ENCODE measurements at regions of chr19 and their contacts with region 1.

Region 1: DNA sequence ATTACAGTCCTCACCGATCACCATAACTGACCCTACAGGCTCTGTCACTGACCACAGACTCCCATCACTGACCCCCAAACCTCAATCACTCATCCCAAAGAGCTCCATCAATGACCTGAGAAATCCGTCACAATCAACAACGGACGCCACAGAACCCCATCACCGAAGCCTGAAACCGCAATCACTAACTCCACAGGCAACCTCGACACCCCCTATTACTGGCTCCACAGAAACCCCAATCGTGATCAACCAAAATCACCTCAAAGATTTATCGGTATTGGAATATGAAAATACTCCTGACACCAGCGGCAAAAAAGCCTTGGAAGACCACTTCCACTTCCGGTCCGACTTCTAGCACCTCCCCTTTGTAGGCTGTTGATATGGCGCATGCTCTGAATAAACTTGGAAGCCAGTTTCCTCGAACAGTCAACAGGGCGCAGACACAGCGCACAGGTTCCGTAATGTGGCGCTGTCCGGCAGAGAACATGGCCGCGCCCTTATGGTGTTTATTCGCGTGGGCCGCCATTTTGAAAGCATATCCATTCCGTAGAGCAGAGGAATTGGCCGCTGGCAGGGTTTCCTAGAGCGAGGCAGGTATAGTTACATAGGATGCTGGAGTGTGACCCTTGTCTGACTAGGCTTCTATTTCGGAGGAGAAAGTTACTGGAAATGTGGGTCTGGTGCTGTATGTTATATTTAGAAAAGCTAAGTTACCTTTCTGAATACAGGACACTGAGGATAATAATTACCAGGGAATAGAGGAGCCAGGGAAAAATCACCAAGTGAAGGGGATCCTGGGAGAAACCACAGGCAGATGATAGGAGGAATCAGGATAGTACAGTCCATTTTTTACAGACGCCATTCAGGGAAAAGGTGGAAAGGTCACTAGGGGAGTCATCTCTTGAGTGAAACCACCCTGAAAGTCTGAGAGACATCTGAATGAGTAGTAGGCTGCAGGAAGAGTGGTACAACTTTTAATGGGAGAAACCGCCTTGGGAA is at the start of gene ZNF585A:
- DNase-seq: peak; percentile 96
- ATAC-seq: peak; percentile 100
- H3K4me3 ChIP-seq: peak within 1 kb of the TSS; percentile 72 to 96 (median 82)
- H3K4me3 Mint-ChIP-seq: no peak within 1 kb of the TSS
- H3K27ac ChIP-seq: peak within 1 kb of the TSS; percentile 70 to 89
- H3K27ac Mint-ChIP-seq: no peak within 1 kb of the TSS
- H3K4me1 ChIP-seq: peaks cover 5 to 7% of the 10 kb centered on the region in 2 donors
- H3K4me1 Mint-ChIP-seq: peaks cover 3% of the 10 kb centered on the region
- H3K27me3 ChIP-seq: no peaks in the 10 kb centered on the region
- H3K27me3 Mint-ChIP-seq: no peaks in the 10 kb centered on the region
- CTCF ChIP-seq: peak; percentile 23
- total RNA-seq, gene ZNF585A: 20.0 and 22.0 TPM in 2 replicates

Region 2: DNA sequence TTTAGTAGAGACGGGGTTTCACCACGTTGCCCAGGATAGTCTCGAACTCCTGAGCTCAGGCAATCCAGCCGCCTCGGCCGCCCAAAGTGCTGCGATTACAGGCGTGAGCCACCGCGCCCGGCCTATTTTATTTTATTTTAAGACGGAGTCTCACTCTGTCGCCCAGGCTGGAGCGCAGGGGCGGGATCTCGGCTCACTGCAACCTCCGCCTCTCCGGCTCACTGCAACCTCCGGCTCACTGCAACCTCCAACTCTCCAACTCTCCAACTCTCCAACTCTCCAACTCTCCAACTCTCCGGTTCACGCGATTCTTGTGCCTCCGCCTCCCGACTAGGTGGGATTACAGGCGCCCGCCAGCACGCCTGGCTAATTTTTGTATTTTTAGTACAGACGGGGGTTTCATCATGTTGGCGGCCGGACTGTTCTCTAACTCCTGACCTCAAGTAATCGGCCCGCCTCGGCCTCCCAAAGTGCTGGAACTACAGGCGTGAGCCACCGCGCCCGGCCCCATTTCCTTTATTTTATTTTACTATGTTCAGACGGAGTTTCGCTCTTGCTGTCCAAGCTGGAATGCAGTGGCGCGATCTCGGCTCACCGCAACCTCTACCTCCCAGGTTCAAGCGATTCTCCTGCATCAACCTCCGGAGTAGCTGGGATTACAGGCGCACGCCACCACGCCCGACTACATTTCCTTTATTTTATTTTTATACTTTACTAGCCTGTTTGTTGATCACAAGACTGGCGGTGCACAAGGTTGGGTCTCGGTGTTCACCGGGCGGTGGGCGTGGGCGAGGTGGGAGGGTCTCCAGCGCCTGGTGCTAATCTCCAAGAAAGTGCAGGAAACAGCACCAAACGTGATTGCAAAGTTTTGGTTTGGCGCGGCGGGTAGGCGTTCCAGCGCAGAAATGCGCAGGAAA is 376.3 kb before region 1 on chr19:
- CTCF ChIA-PET with region 1: no interaction called
- POLR2A ChIA-PET with region 1: no interaction called
- intact Hi-C with region 1: no loop called
- DNase-seq: no peak
- ATAC-seq: no peak
- H3K4me3 ChIP-seq: peak overlapping the region; percentile 63 to 91 (median 84)
- H3K4me3 Mint-ChIP-seq: peak overlapping the region; percentile 95
- H3K27ac ChIP-seq: peak overlapping the region; percentile 86 to 90
- H3K27ac Mint-ChIP-seq: peak overlapping the region; percentile 99
- H3K4me1 ChIP-seq: peaks cover 0 to 17% of the 10 kb centered on the region in 2 donors
- H3K4me1 Mint-ChIP-seq: peaks cover 25% of the 10 kb centered on the region
- H3K27me3 ChIP-seq: peaks cover 0 to 6% (median 0%) of the 10 kb centered on the region in 4 experiments
- H3K27me3 Mint-ChIP-seq: peaks cover 7% of the 10 kb centered on the region
- CTCF ChIP-seq: no peak

Region 3: DNA sequence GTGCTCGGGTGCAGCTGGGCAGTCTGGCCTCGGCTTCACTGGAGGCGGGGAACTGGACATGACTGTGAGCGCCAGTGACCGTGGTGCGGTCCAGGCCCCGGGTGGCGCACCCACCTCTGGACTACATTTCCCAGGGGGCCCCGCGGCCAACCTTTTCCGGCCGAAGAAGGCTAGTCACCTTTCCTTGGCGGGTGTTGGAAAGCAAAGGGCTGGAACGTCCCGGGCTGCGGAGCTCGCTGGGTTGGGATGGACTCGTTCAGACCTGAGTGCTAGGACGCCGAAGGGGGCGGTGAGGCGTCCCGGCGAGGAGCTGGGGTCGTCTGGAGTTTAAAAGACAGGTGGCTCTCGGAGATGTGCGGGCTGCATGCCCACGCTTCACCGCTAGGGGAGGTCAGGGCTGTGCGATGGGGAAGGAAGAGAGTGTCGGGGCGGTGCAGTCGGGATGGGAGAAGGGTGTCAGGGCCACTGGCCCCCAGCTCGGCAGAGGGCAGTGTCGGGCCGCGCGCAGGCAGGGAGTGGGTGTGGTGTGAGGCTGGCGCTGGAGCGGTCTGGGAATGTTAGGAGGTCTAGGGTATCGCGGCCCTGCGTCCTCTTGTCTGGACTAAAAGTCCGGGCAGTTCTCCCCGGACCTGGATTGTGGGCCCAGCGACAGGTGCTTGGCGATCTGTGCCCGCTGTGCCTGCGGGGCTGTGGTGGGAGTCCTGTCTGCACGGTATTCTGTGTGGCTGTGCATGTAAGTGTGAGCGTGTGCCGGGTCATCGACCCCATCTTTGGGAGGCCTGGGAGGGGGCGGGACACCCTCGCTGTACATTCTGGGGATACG is 199.4 kb before region 1 on chr19:
- CTCF ChIA-PET with region 1: no interaction called
- POLR2A ChIA-PET with region 1: no interaction called
- intact Hi-C with region 1: loop called (anchors 2 kb)
- DNase-seq: peak; percentile 92
- ATAC-seq: peak; percentile 97
- H3K4me3 ChIP-seq: peak overlapping the region; percentile 52 to 92 (median 79)
- H3K4me3 Mint-ChIP-seq: peak overlapping the region; percentile 97
- H3K27ac ChIP-seq: peak overlapping the region; percentile 49 to 71
- H3K27ac Mint-ChIP-seq: peak overlapping the region; percentile 91
- H3K4me1 ChIP-seq: peaks cover 11 to 16% of the 10 kb centered on the region in 2 donors
- H3K4me1 Mint-ChIP-seq: peaks cover 13% of the 10 kb centered on the region
- H3K27me3 ChIP-seq: no peaks in the 10 kb centered on the region
- H3K27me3 Mint-ChIP-seq: no peaks in the 10 kb centered on the region
- CTCF ChIP-seq: peak; percentile 78

Region 4: GRCh38 chr19:37127999-37128820 is 44.5 kb before region 1 on chr19:
- CTCF ChIA-PET with region 1: no interaction called
- POLR2A ChIA-PET with region 1: no interaction called
- intact Hi-C with region 1: no loop called
- DNase-seq: no peak
- ATAC-seq: no peak
- H3K4me3 ChIP-seq: peak overlapping the region in 1 of 5 experiments; percentile 33
- H3K4me3 Mint-ChIP-seq: no peak overlapping the region
- H3K27ac ChIP-seq: no peak overlapping the region
- H3K27ac Mint-ChIP-seq: no peak overlapping the region
- H3K4me1 ChIP-seq: no peaks in the 10 kb centered on the region
- H3K4me1 Mint-ChIP-seq: no peaks in the 10 kb centered on the region
- H3K27me3 ChIP-seq: no peaks in the 10 kb centered on the region
- H3K27me3 Mint-ChIP-seq: no peaks in the 10 kb centered on the region
- CTCF ChIP-seq: no peak

Region 5: GRCh38 chr19:37370880-37371661 is 198.4 kb after region 1 on chr19 and contains the start of gene ZNF527:
- CTCF ChIA-PET with region 1: no interaction called
- POLR2A ChIA-PET with region 1: no interaction called
- intact Hi-C with region 1: loop called (anchors 1 kb)
- DNase-seq: peak; percentile 98
- ATAC-seq: peak; percentile 96
- H3K4me3 ChIP-seq: peak within 1 kb of the TSS; percentile 59 to 87 (median 79)
- H3K4me3 Mint-ChIP-seq: peak within 1 kb of the TSS; percentile 99
- H3K27ac ChIP-seq: peak within 1 kb of the TSS; percentile 73 to 87
- H3K27ac Mint-ChIP-seq: peak within 1 kb of the TSS; percentile 98
- H3K4me1 ChIP-seq: peaks cover 5 to 14% of the 10 kb centered on the region in 2 donors
- H3K4me1 Mint-ChIP-seq: peaks cover 12% of the 10 kb centered on the region
- H3K27me3 ChIP-seq: no peaks in the 10 kb centered on the region
- H3K27me3 Mint-ChIP-seq: no peaks in the 10 kb centered on the region
- CTCF ChIP-seq: peak; percentile 12
- total RNA-seq, gene ZNF527: 9.0 and 11.4 TPM in 2 replicates

Measured in B cell (primary cell).